IMR-90 (cell line): ENCODE measurements at regions of chr7 and their contacts with region 1.

Region 1: DNA sequence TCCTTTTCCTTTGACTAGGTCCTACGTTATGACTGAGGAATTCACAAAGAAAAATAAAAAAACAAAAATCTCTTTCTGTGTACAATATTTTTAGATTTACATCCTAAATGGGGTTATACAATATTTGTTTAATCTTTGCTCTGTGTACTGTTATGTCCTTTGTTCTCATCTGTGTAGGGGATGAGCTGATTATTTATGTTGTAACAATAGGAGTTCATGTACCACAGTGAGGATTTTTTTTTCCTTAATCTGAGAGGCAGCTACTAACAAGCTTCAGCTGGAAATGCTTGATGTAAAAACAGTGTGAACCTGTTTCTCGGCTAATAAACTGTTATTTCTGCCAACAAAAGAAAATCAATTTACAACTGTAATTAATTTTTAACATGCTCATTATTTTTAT is 58.0 kb downstream of the ORC5 start:
- DNase-seq: no peak
- ATAC-seq: peak; percentile 66
- H3K4me3 ChIP-seq: no peak overlapping the region
- H3K27ac ChIP-seq: no peak overlapping the region
- H3K4me1 ChIP-seq: no peaks in the 10 kb centered on the region
- H3K27me3 ChIP-seq: no peaks in the 10 kb centered on the region
- CTCF ChIP-seq: no peak
- POLR2A ChIP-seq: no peak
- RAD21 ChIP-seq: no peak

Region 2: GRCh38 chr7:103989785-103990767 is 159.7 kb before region 1 on chr7:
- CTCF ChIA-PET with region 1: no interaction called
- POLR2A ChIA-PET with region 1: no interaction called
- dilution Hi-C with region 1: no loop called
- in situ Hi-C with region 1: no loop called
- intact Hi-C with region 1: loop called (anchors 5 kb)
- DNase-seq: peak; percentile 47
- ATAC-seq: peak; percentile 65
- H3K4me3 ChIP-seq: peak overlapping the region; percentile 78
- H3K27ac ChIP-seq: peak overlapping the region; percentile 66
- H3K4me1 ChIP-seq: peaks cover 5% of the 10 kb centered on the region; the same call in 1 of the 2 replicates
- H3K27me3 ChIP-seq: no peaks in the 10 kb centered on the region; the same call in 1 of the 2 replicates
- CTCF ChIP-seq: 0 out of 2 replicates have a peak, but pooled peaks have one; percentile 5
- POLR2A ChIP-seq: no peak
- RAD21 ChIP-seq: no peak

Region 3: GRCh38 chr7:104106108-104106905 is 43.5 kb before region 1 on chr7:
- CTCF ChIA-PET with region 1: interaction called, 9 read pairs
- POLR2A ChIA-PET with region 1: no interaction called
- dilution Hi-C with region 1: no loop called
- in situ Hi-C with region 1: no loop called
- intact Hi-C with region 1: loop called (anchors 5 kb)
- DNase-seq: peak; percentile 50
- ATAC-seq: peak; percentile 86
- H3K4me3 ChIP-seq: no peak overlapping the region
- H3K27ac ChIP-seq: no peak overlapping the region
- H3K4me1 ChIP-seq: no peaks in the 10 kb centered on the region
- H3K27me3 ChIP-seq: peaks cover 2% of the 10 kb centered on the region; the same call in 1 of the 2 replicates
- CTCF ChIP-seq: peak; percentile 52
- POLR2A ChIP-seq: no peak
- RAD21 ChIP-seq: peak; percentile 50

Region 4: DNA sequence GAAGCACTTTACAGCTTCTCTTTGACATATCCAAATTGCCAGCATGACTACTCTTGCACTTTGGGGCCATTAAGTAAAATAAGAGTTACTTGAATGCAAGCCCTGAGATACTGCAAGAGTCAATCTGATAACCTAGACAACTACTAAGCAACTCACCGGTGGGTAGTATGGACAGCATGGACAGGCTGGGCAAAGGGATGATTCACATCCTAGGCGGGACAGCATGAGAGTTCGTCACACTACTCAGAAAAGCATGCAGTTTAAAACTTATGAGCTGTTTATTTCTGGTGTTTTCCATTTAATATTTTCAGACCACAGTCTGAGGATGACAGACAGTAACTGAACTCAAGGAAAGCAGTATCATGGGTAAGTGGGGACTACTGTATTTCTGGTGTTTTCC is 26.0 kb before region 1 on chr7:
- CTCF ChIA-PET with region 1: no interaction called
- POLR2A ChIA-PET with region 1: no interaction called
- dilution Hi-C with region 1: no loop called
- in situ Hi-C with region 1: no loop called
- intact Hi-C with region 1: no loop called
- DNase-seq: peak; percentile 73
- ATAC-seq: peak; percentile 85
- H3K4me3 ChIP-seq: no peak overlapping the region
- H3K27ac ChIP-seq: no peak overlapping the region
- H3K4me1 ChIP-seq: peaks cover 2% of the 10 kb centered on the region; the same call in 1 of the 2 replicates
- H3K27me3 ChIP-seq: no peaks in the 10 kb centered on the region
- CTCF ChIP-seq: no peak
- POLR2A ChIP-seq: no peak
- RAD21 ChIP-seq: no peak

Region 5: GRCh38 chr7:104296900-104297299 is 147.1 kb after region 1 on chr7:
- CTCF ChIA-PET with region 1: no interaction called
- POLR2A ChIA-PET with region 1: no interaction called
- dilution Hi-C with region 1: no loop called
- in situ Hi-C with region 1: no loop called
- intact Hi-C with region 1: no loop called
- DNase-seq: no peak
- ATAC-seq: no peak
- H3K4me3 ChIP-seq: no peak overlapping the region
- H3K27ac ChIP-seq: no peak overlapping the region
- H3K4me1 ChIP-seq: no peaks in the 10 kb centered on the region
- H3K27me3 ChIP-seq: no peaks in the 10 kb centered on the region
- CTCF ChIP-seq: no peak
- POLR2A ChIP-seq: no peak
- RAD21 ChIP-seq: no peak